ENCODE measurements at regions of chr1 and their contacts with region 1.

Region 1: DNA sequence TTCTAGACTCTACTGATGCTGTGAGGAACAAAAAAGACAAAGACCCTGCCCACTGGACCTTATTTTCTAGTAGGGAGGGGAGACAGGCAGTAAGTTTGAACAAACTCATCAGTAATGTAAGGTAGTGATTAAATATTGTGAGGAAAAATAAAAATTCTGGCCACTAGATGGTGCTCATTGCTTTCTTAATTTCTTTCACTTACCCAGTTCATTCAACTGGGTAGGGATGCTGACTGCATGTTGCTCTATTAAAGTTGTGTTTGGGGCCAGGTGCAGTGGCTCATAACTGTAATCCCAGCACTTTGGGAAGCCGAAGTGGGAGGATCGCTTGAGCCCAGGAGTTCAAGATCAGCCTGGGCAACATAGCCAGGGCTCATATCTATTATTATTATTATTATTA is 6.3 kb upstream of the KYAT3 start:
- DNase-seq: peak in 1 of 2 experiments; percentile 53
- H3K4me3 ChIP-seq: no peak overlapping the region
- H3K4me3 Mint-ChIP-seq: no peak overlapping the region
- H3K27ac Mint-ChIP-seq: no peak overlapping the region
- H3K4me1 ChIP-seq: peaks cover 5% of the 10 kb centered on the region; the same call in 1 of the 2 replicates
- H3K4me1 Mint-ChIP-seq: no peaks in the 10 kb centered on the region
- H3K27me3 ChIP-seq: no peaks in the 10 kb centered on the region
- H3K27me3 Mint-ChIP-seq: no peaks in the 10 kb centered on the region
- CTCF ChIP-seq: peak in 1 of 2 experiments; percentile 39

Region 2: DNA sequence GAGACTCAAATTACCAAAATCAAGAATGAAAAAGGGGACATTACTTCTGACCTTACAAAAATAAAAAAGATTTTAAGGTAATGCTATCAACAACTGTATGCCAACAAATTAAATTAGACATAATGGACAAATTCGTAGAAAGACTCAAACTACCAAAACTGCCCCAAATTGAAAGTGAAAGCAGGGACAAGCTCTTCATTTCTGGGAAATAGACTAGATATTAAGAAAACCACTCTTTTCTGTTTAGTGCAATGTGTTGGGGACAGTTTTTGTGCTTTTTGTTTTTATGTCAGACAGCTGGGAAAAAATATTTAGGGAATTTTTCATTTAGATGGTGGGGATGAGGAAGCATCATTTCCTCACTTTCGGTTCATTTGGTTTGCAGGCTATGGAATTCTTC is 71.2 kb after region 1 on chr1:
- CTCF ChIA-PET with region 1: no interaction called
- POLR2A ChIA-PET with region 1: no interaction called
- intact Hi-C with region 1: loop called (anchors 5 kb)
- DNase-seq: no peak
- H3K4me3 ChIP-seq: no peak overlapping the region
- H3K4me3 Mint-ChIP-seq: no peak overlapping the region
- H3K27ac Mint-ChIP-seq: no peak overlapping the region
- H3K4me1 ChIP-seq: no peaks in the 10 kb centered on the region
- H3K4me1 Mint-ChIP-seq: no peaks in the 10 kb centered on the region
- H3K27me3 ChIP-seq: no peaks in the 10 kb centered on the region
- H3K27me3 Mint-ChIP-seq: no peaks in the 10 kb centered on the region
- CTCF ChIP-seq: no peak

Region 3: DNA sequence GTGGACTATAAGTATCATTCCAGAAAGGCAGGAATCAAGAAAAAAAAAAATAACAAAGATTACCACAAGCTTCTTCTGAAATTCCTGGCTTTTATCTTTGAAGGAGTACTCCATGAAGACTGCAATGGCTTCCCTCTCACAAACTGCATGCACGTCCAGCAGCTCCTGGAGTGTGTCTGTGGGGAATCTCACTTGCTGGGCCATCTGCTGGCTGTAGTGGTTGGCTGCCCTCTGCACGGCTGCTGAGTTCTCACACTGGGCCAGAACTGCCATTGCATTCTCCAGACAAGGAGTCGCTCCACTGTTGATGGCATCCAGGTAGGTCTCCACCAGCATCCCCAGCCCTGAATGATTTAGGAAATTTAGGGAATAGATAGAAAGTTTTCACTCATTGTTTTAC is 150.5 kb after region 1 on chr1:
- CTCF ChIA-PET with region 1: no interaction called
- POLR2A ChIA-PET with region 1: no interaction called
- intact Hi-C with region 1: loop called (anchors 1 kb)
- DNase-seq: peak; percentile 35 to 53
- H3K4me3 ChIP-seq: no peak overlapping the region
- H3K4me3 Mint-ChIP-seq: no peak overlapping the region
- H3K27ac Mint-ChIP-seq: no peak overlapping the region
- H3K4me1 ChIP-seq: no peaks in the 10 kb centered on the region
- H3K4me1 Mint-ChIP-seq: no peaks in the 10 kb centered on the region
- H3K27me3 ChIP-seq: no peaks in the 10 kb centered on the region
- H3K27me3 Mint-ChIP-seq: no peaks in the 10 kb centered on the region
- CTCF ChIP-seq: peak in 1 of 2 experiments; percentile 28

Region 4: GRCh38 chr1:89276690-89277089 is 278.0 kb after region 1 on chr1:
- CTCF ChIA-PET with region 1: no interaction called
- POLR2A ChIA-PET with region 1: no interaction called
- intact Hi-C with region 1: loop called (anchors 2 kb)
- DNase-seq: no peak
- H3K4me3 ChIP-seq: no peak overlapping the region
- H3K4me3 Mint-ChIP-seq: no peak overlapping the region
- H3K27ac Mint-ChIP-seq: no peak overlapping the region
- H3K4me1 ChIP-seq: no peaks in the 10 kb centered on the region
- H3K4me1 Mint-ChIP-seq: no peaks in the 10 kb centered on the region
- H3K27me3 ChIP-seq: no peaks in the 10 kb centered on the region
- H3K27me3 Mint-ChIP-seq: no peaks in the 10 kb centered on the region
- CTCF ChIP-seq: no peak

Region 5: GRCh38 chr1:89358287-89358893 is 359.7 kb after region 1 on chr1:
- CTCF ChIA-PET with region 1: no interaction called
- POLR2A ChIA-PET with region 1: no interaction called
- intact Hi-C with region 1: loop called (anchors 1 kb)
- DNase-seq: peak; percentile 68 to 69
- H3K4me3 ChIP-seq: no peak overlapping the region
- H3K4me3 Mint-ChIP-seq: peak overlapping the region; percentile 13
- H3K27ac Mint-ChIP-seq: no peak overlapping the region
- H3K4me1 ChIP-seq: peaks cover 19% of the 10 kb centered on the region
- H3K4me1 Mint-ChIP-seq: peaks cover 14% of the 10 kb centered on the region
- H3K27me3 ChIP-seq: no peaks in the 10 kb centered on the region
- H3K27me3 Mint-ChIP-seq: no peaks in the 10 kb centered on the region
- CTCF ChIP-seq: peak; percentile 43 to 57

Measured in Caco-2 (cell line).